Cardiac septum (tissue), 1 donor: ENCODE measurements at regions of chr1 and their contacts with region 1.

Region 1: DNA sequence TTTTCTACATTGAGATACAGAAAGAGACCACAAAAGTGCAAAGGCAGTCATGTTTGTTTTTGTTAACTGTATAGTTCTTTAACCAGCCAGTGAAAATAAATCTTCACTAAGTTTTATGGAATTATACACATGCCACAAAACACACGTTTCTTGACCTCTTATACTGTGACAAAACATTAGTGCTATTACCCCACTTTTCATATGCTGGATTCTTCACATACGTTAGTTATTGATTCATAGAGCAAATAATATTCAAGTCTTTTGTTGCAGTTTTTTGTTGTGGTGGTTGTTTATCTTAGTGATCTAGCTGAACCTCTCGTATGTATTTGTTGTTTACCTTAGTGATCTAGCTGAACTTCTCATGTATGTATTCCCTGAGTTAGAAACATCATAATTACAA is 28.0 kb downstream of the LYPLAL1 start:
- DNase-seq: no peak

Region 2: GRCh38 chr1:218930472-218931241 is 271.0 kb before region 1 on chr1:
- intact Hi-C with region 1: no loop called
- DNase-seq: no peak

Region 3: GRCh38 chr1:219264561-219264960 is 62.9 kb after region 1 on chr1:
- intact Hi-C with region 1: no loop called
- DNase-seq: no peak

Region 4: DNA sequence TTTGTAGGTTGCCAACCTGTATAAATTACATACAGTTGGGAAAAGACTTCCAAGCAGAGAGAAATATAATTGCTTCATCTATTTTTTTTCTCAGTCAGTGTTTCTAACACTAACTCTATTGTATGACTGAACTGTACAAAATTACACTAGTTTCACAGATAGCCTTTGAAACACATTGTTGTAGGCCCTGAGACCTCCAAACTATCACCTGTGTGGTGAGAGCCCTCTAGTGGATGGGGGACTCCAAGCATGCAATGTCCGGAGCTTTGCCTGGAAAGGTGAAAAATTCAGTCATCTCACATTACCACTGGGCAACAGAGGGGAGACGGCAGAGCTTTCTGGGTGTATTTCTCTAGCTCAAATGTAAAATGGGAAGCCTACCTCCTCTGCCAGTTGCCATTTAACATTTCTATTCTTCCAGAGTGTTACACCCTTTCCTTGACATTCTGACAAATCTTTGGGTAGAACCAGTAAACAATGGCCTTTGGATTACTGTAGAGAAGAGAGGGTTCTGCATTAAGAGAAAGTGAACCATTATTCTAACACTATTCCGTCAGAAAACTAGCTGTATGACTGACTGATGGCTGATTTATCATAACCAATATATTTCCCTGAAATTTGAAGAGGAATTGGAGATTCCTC is 184.3 kb after region 1 on chr1:
- intact Hi-C with region 1: loop called (anchors 5 kb)
- DNase-seq: no peak